ENCODE measurements at regions of chrX and their contacts with region 1.

Region 1: DNA sequence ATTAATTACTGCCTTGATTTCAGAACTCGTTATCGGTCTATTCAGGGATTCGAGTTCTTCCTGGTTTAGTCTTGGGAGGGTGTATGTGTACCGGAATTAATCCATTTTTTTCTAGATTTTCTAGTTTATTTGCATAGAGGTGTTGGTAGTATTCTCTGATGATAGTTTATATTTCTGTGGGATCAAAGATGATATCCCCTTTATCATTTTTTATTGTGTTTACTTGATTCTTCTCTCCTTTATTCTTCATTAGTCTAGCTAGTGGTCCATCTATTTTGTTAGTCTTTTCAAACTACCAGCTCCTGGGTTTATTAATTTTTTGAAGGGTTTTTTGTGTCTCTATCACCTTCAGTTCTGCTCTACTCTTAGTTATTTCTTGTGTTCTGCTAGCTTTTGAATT is 32.1 kb downstream of the CDX4 start:
- DNase-seq: no peak
- H3K4me3 ChIP-seq: no peak overlapping the region
- H3K27ac ChIP-seq: no peak overlapping the region
- H3K4me1 ChIP-seq: no peaks in the 10 kb centered on the region
- H3K27me3 ChIP-seq: no peaks in the 10 kb centered on the region
- CTCF ChIP-seq: no peak
- POLR2A ChIP-seq: no peak

Region 2: GRCh38 chrX:73447311-73447794 is 31.6 kb before region 1 on chrX:
- intact Hi-C with region 1: no loop called
- DNase-seq: no peak
- H3K4me3 ChIP-seq: no peak overlapping the region
- H3K27ac ChIP-seq: no peak overlapping the region
- H3K4me1 ChIP-seq: no peaks in the 10 kb centered on the region
- H3K27me3 ChIP-seq: no peaks in the 10 kb centered on the region
- CTCF ChIP-seq: no peak
- POLR2A ChIP-seq: no peak

Region 3: GRCh38 chrX:74160358-74160757 is 681.4 kb after region 1 on chrX:
- intact Hi-C with region 1: loop called (anchors 5 kb)
- DNase-seq: no peak
- H3K4me3 ChIP-seq: no peak overlapping the region
- H3K27ac ChIP-seq: no peak overlapping the region
- H3K4me1 ChIP-seq: no peaks in the 10 kb centered on the region
- H3K27me3 ChIP-seq: no peaks in the 10 kb centered on the region
- CTCF ChIP-seq: no peak
- POLR2A ChIP-seq: no peak

Measured in vagina (tissue), 2 donors.